ENCODE measurements at regions of chrX and their contacts with region 1.

Region 1: DNA sequence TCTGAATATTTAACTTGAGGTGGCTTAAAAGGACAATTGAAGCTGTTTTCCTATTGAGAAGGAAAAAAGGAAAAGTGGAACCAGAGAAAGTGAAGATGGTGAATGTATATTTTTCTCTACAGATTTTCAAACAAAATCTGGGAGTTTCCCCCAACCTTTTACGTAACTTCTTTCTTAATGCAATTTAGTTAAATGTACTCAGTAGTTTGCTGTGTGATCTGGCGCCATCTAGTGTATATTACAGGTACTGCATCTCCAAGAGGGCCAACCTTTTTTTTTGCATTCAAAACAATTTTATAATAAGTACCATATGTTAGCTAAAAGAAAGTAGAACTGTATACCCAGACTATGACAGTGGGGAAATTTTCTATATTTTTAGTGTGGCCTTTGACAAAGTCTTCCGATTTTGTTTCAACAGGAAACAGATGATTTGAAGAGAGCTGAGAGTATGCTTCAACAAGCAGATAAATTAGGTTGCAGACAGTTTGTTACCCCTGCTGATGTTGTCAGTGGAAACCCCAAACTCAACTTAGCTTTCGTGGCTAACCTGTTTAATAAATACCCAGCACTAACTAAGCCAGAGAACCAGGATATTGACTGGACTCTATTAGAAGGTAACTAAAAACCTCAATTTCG is 82.0 kb downstream of the PLS3 start:
- DNase-seq: no peak
- H3K4me3 ChIP-seq: no peak overlapping the region
- H3K27ac ChIP-seq: no peak overlapping the region
- H3K4me1 ChIP-seq: peaks cover 0 to 5% (median 0%) of the 10 kb centered on the region in 4 experiments; a peak in 1 of 7 replicates
- H3K27me3 ChIP-seq: no peaks in the 10 kb centered on the region
- CTCF ChIP-seq: peak in 2 of 3 experiments; percentile 31 to 64; a peak in 2 of 4 replicates
- EP300 ChIP-seq: no peak
- POLR2A ChIP-seq: no peak
- RAD21 ChIP-seq: peak; percentile 69 to 70

Region 2: DNA sequence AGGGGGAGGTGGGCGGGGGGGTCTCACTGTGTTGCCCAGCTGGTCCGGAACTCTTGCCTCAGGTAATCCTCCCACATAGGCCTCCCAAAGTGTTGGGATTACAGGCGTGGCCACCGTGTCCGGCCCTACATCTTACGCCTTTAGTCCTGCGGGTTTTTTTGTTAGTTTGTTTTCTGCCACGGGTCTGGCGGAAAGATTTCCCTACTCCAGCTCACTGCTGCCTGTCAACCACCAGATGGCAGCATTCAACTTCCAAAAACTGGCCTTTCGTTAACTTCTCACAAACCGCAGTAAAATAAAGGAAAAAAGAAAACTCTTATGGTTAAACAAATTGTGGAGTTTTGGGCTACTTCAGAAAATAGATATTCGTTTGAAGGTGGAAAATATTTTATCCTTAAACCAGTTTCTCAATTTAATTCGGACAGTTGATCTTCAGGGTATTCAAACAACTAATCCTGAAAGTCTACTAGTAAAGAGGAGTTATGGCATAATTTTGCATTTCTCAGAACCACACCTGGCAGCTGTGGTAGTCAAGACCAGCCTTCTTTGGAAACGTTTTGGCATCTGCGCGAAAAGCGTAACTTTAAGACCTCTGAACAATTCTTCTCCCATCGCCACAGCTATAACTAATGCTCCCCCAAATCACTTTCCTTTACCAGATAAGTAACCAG is 312.4 kb before region 1 on chrX:
- CTCF ChIA-PET with region 1: interaction called, 17 read pairs
- POLR2A ChIA-PET with region 1: no interaction called
- DNase-seq: no peak
- H3K4me3 ChIP-seq: no peak overlapping the region
- H3K27ac ChIP-seq: no peak overlapping the region
- H3K4me1 ChIP-seq: peaks cover 0 to 5% (median 0%) of the 10 kb centered on the region in 4 experiments; a peak in 2 of 7 replicates
- H3K27me3 ChIP-seq: no peaks in the 10 kb centered on the region
- CTCF ChIP-seq: peak; percentile 41 to 56 (median 56)
- EP300 ChIP-seq: no peak
- POLR2A ChIP-seq: no peak
- RAD21 ChIP-seq: peak; percentile 83 to 87

Region 3: DNA sequence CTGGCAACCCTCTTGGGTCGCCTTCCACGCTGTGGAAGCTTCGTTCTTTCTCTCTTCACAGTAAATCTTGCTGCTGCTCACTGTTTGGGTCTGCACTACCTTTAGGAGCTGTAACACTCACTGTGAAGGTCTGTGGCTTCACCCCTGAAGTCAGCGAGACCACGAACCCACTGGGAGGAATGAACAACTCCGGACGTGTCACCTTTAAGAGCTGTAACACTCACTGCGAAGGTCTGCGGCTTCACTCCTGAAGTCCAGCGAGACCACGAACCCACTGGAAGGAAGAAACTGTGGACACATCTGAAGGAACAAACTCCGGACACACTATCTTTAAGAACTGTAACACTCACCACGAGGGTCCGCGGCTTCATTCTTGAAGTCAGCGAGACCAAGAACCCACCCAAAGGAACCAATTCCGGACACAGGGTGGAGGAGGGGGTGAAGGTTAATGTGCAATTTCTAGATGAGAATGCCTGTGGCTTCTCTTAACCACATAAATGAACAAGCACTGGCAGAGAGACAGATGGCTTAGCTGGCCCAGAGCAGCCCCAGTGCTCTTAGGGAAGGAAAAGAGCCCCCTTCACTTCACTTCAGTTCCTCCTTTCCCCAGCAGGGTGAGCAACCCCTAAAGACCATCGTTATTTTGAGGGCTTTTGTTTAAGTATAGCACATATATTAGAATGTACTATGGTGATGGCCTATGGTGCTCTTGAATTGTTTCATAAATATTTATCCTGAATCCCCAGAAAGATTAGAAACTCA is 280.5 kb before region 1 on chrX:
- CTCF ChIA-PET with region 1: interaction called, 11 read pairs
- POLR2A ChIA-PET with region 1: no interaction called
- DNase-seq: no peak
- H3K4me3 ChIP-seq: no peak overlapping the region
- H3K27ac ChIP-seq: no peak overlapping the region
- H3K4me1 ChIP-seq: no peaks in the 10 kb centered on the region
- H3K27me3 ChIP-seq: no peaks in the 10 kb centered on the region; a peak in 1 of 7 replicates
- CTCF ChIP-seq: peak; percentile 14 to 28 (median 20); a peak in 3 of 4 replicates
- EP300 ChIP-seq: no peak
- POLR2A ChIP-seq: no peak
- RAD21 ChIP-seq: peak in 1 of 2 experiments; percentile 42; a peak in 2 of 4 replicates

Region 4: DNA sequence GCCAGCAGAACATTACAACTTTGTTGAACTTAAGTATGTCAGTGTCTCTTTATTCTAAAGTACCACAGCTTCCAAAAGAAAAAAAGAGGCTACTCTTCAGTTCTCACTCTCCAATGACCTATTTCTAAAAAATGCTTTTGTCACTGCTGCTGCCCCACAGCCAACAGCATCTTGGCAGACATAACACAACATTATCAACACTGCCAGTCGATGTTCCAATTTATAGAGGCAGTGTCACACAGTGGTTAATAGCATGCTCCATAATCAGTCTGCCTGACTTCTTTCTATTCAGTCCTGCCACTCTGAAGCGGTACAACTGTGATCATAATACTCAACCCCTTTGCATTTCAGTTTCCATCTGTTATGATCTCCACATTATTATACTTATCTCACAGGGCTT is 12.8 kb before region 1 on chrX:
- CTCF ChIA-PET with region 1: interaction called, 17 read pairs
- POLR2A ChIA-PET with region 1: no interaction called
- DNase-seq: no peak
- H3K4me3 ChIP-seq: no peak overlapping the region
- H3K27ac ChIP-seq: no peak overlapping the region
- H3K4me1 ChIP-seq: no peaks in the 10 kb centered on the region
- H3K27me3 ChIP-seq: no peaks in the 10 kb centered on the region
- CTCF ChIP-seq: no peak
- EP300 ChIP-seq: no peak
- POLR2A ChIP-seq: no peak
- RAD21 ChIP-seq: no peak

Region 5: DNA sequence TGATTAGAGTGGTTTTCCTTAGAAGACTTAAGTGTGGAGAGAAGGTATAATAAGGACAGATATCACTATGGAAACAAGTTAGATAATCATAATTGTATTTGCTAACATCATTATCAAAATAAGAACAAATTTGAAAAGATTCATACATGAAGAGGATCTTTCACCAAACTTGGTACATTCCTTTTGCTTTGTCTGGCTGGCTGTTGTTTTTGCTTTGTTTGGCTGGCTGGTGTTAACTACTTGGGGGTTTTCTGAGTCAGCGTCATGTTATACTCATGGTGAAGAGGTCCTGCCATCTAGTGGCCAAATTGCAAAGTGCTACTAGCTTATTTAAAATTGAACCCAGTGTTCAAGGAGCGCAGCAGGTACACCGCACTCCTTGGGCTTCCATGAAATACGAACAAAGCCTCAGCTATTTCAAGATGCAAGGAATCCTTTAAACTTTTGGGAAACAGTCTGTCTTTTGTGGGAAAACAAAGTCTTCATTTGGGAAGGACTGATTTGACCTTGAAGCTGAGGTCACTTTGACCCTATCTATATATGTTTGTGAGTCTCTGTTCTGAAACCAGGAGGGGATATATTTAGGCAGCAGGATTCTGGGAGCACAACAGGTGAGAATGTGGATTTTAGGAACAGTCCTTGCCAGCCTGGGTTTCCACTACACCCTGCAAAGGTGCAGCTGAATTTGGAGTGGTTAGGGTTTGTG is 47.7 kb after region 1 on chrX:
- CTCF ChIA-PET with region 1: interaction called, 17 read pairs
- POLR2A ChIA-PET with region 1: no interaction called
- DNase-seq: peak; percentile 54 to 63
- H3K4me3 ChIP-seq: no peak overlapping the region
- H3K27ac ChIP-seq: peak overlapping the region; percentile 79; the same call in 1 of the 2 replicates
- H3K4me1 ChIP-seq: peaks cover 0 to 27% (median 13%) of the 10 kb centered on the region in 4 experiments; a peak in 5 of 7 replicates
- H3K27me3 ChIP-seq: no peaks in the 10 kb centered on the region
- CTCF ChIP-seq: peak in 2 of 3 experiments; percentile 50 to 68; a peak in 3 of 4 replicates
- EP300 ChIP-seq: no peak
- POLR2A ChIP-seq: no peak
- RAD21 ChIP-seq: peak; percentile 76 to 77